Activated CD8-positive, alpha-beta memory T cell treated with anti-CD3 and anti-CD28 coated beads, Interleukin-2, amount 10 ng/mL, durations not matched to agents 7 days and 5 days (primary cell): ENCODE measurements at regions of chr1 and their contacts with region 1.

Region 1: GRCh38 chr1:48817505-48818114 is 40.9 kb upstream of the BEND5 start:
- DNase-seq: no peak
- ATAC-seq: no peak
- H3K4me3 Mint-ChIP-seq: no peak overlapping the region
- H3K27ac Mint-ChIP-seq: no peak overlapping the region
- H3K4me1 Mint-ChIP-seq: no peaks in the 10 kb centered on the region
- H3K27me3 Mint-ChIP-seq: no peaks in the 10 kb centered on the region

Region 2: GRCh38 chr1:48677306-48678287 is 140.0 kb before region 1 on chr1:
- CTCF ChIA-PET with region 1: interaction called, 13 read pairs
- DNase-seq: peak; percentile 41
- ATAC-seq: no peak
- H3K4me3 Mint-ChIP-seq: no peak overlapping the region
- H3K27ac Mint-ChIP-seq: no peak overlapping the region
- H3K4me1 Mint-ChIP-seq: no peaks in the 10 kb centered on the region
- H3K27me3 Mint-ChIP-seq: peaks cover 5% of the 10 kb centered on the region